OCI-LY7 (cell line): ENCODE measurements at regions of chr11 and their contacts with region 1.

Region 1: DNA sequence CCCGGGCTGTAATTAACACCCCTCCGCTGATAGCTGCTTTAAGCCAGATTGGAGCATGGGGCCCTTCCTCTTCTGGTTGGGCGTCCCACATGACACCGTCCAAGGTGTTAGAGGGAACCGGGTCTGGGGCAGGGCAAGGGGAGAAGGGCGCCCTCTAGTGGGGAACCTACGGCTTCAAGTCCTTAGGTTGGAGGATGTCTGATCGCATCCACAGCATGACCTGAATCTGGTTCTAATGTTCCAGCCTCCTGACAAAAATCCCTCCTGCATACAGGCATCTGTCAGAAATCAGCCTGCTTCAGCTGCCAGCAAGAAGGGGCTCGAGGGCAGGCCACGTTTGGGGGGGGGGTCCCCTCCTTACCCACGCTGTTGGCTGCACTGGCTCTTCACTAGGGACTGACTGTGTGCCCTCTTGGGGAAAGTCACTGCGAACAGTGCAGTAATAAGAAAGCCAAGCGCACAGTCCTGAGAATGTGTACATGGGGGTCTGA is 94.2 kb upstream of the TBCEL start:
- DNase-seq: peak; percentile 73
- H3K4me3 ChIP-seq: no peak overlapping the region
- H3K27ac ChIP-seq: no peak overlapping the region
- H3K4me1 ChIP-seq: peaks cover 44% of the 10 kb centered on the region
- CTCF ChIP-seq: peak; percentile 89

Region 2: GRCh38 chr11:120703358-120704152 is 226.2 kb before region 1 on chr11:
- CTCF ChIA-PET with region 1: no interaction called
- POLR2A ChIA-PET with region 1: no interaction called
- intact Hi-C with region 1: loop called (anchors 2 kb)
- DNase-seq: peak; percentile 81
- H3K4me3 ChIP-seq: peak overlapping the region; percentile 56
- H3K27ac ChIP-seq: peak overlapping the region; percentile 100
- H3K4me1 ChIP-seq: peaks cover 65% of the 10 kb centered on the region
- CTCF ChIP-seq: no peak

Region 3: GRCh38 chr11:120735035-120735434 is 194.7 kb before region 1 on chr11:
- CTCF ChIA-PET with region 1: no interaction called
- POLR2A ChIA-PET with region 1: no interaction called
- intact Hi-C with region 1: no loop called
- DNase-seq: no peak
- H3K4me3 ChIP-seq: no peak overlapping the region
- H3K27ac ChIP-seq: no peak overlapping the region
- H3K4me1 ChIP-seq: no peaks in the 10 kb centered on the region
- CTCF ChIP-seq: no peak

Region 4: DNA sequence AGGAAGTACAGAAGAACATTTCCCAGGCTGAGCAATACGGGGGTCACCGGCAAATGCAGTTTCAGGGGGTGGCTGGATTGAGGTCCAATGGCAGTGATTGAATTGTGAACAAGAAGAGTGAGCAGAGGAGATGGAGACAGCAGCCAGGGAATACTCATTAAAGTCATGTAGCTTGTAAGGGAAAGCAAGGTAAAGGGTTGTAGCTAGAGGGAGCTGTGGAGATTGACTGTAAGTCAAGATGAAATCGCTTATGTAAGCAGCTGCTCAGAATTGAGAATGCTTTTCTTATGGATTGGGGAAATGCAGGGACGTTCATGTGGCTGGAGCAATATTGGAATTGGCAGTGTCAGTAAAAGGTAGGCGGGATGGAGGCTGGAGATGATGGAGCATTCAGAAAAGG is 17.2 kb before region 1 on chr11:
- CTCF ChIA-PET with region 1: interaction called, 9 read pairs
- POLR2A ChIA-PET with region 1: interaction called, 4 read pairs
- intact Hi-C with region 1: loop called (anchors 2 kb)
- DNase-seq: peak; percentile 46
- H3K4me3 ChIP-seq: no peak overlapping the region
- H3K27ac ChIP-seq: no peak overlapping the region
- H3K4me1 ChIP-seq: no peaks in the 10 kb centered on the region
- CTCF ChIP-seq: peak; percentile 72